Naive thymus-derived CD4-positive, alpha-beta T cell (primary cell): ENCODE measurements at regions of chr11 and their contacts with region 1.

Region 1: GRCh38 chr11:7442588-7443215 is 42.6 kb upstream of the OLFML1 start:
- DNase-seq: peak; percentile 15 to 69 (median 56)
- ATAC-seq: peak; percentile 87
- H3K4me3 ChIP-seq: no peak overlapping the region
- H3K4me3 Mint-ChIP-seq: no peak overlapping the region
- H3K27ac ChIP-seq: no peak overlapping the region
- H3K27ac Mint-ChIP-seq: no peak overlapping the region
- H3K4me1 ChIP-seq: no peaks in the 10 kb centered on the region
- H3K4me1 Mint-ChIP-seq: peaks cover 0 to 5% (median 0%) of the 10 kb centered on the region in 7 donors
- H3K27me3 ChIP-seq: no peaks in the 10 kb centered on the region
- H3K27me3 Mint-ChIP-seq: no peaks in the 10 kb centered on the region

Region 2: DNA sequence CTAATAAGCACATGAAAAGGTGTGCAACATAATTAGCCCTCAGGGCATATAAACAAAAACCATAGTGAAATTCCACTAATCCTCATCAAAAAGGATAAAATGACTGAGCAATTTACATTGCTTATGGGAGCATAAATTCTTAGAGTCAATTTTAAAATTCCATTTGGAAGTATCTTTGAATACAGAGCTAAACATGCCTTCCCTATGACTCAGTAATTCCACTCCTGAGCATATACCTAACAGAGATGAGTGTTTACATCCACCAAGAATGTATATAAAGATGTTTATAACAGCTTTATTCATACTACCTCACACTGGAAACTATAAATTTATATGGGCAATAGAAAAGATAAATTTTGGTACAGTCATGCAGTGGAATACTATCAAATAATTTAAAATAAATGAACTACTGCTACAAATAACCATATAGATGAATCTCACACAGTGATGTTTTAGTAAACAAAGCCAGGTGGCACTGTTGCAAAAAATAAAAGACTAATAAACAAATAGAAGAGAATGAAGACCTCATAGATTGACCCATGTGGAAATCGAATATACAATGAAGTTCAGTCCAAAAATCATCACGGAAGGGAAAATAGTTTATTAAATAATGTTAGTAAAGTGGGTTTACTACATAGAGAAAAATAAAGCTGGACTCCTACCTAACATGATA is 542.2 kb before region 1 on chr11:
- CTCF ChIA-PET with region 1: no interaction called
- POLR2A ChIA-PET with region 1: no interaction called
- intact Hi-C with region 1: loop called in 1 of 2 experiments (anchors 5 kb)
- DNase-seq: no peak
- ATAC-seq: no peak
- H3K4me3 ChIP-seq: no peak overlapping the region
- H3K4me3 Mint-ChIP-seq: no peak overlapping the region
- H3K27ac ChIP-seq: no peak overlapping the region
- H3K27ac Mint-ChIP-seq: no peak overlapping the region
- H3K4me1 ChIP-seq: no peaks in the 10 kb centered on the region
- H3K4me1 Mint-ChIP-seq: no peaks in the 10 kb centered on the region
- H3K27me3 ChIP-seq: no peaks in the 10 kb centered on the region
- H3K27me3 Mint-ChIP-seq: peaks cover 10 to 52% (median 44%) of the 10 kb centered on the region in 5 donors

Region 3: GRCh38 chr11:7353100-7353499 is 89.6 kb before region 1 on chr11:
- CTCF ChIA-PET with region 1: interaction called, 11 read pairs
- POLR2A ChIA-PET with region 1: no interaction called
- intact Hi-C with region 1: loop called (anchors 1 kb)
- DNase-seq: peak in 2 of 9 donors; percentile 8 to 21
- ATAC-seq: peak; percentile 54
- H3K4me3 ChIP-seq: no peak overlapping the region
- H3K4me3 Mint-ChIP-seq: no peak overlapping the region
- H3K27ac ChIP-seq: no peak overlapping the region
- H3K27ac Mint-ChIP-seq: no peak overlapping the region
- H3K4me1 ChIP-seq: no peaks in the 10 kb centered on the region
- H3K4me1 Mint-ChIP-seq: no peaks in the 10 kb centered on the region
- H3K27me3 ChIP-seq: no peaks in the 10 kb centered on the region
- H3K27me3 Mint-ChIP-seq: peaks cover 0 to 28% (median 20%) of the 10 kb centered on the region in 5 donors

Region 4: DNA sequence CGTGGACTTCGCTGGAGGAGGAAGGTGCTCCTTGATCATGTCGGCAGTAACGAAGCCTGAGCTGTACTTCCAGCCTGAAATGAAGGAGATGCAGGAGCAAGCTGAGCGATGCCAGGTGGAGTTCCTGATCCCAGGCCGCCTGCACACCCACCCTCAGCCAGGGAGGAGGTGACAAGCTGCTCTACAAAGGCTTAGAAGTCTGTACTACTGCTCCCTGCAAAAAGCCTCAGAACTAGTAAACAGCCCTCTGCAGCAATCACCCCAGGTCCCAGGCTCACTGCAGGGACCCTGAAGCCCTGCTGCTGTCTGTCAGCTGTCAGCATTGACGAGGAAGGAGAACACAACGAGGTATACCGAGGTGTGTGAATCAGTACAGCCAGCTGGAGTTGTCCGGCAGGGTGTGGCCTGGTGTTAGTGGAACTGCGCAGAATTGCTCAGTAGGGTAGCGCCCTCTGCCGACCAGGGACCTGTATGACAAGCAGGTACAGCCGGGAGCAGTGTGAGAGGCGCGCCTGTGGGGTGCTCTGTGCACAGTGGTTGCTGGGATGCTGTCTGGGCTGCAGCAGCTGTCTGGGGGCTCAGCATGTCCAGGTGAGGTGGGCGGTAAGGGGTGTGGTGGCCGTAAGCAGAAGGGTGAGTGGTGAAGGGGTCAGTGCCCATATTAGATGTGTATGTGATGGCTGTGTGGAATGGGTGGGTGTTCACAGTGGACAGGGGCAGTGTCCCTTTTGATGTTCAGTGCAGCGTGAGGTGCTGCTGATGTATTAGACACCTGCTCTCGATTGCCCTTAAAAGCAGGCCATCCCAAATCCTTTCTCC is 223.0 kb after region 1 on chr11:
- CTCF ChIA-PET with region 1: interaction called, 3 read pairs
- POLR2A ChIA-PET with region 1: no interaction called
- intact Hi-C with region 1: loop called in 1 of 2 experiments (anchors 1 kb)
- DNase-seq: peak; percentile 24 to 73 (median 62)
- ATAC-seq: peak; percentile 98
- H3K4me3 ChIP-seq: no peak overlapping the region
- H3K4me3 Mint-ChIP-seq: no peak overlapping the region
- H3K27ac ChIP-seq: no peak overlapping the region
- H3K27ac Mint-ChIP-seq: peak overlapping the region in 1 of 9 donors; percentile 17
- H3K4me1 ChIP-seq: no peaks in the 10 kb centered on the region
- H3K4me1 Mint-ChIP-seq: peaks cover 0 to 6% (median 2%) of the 10 kb centered on the region in 7 donors
- H3K27me3 ChIP-seq: no peaks in the 10 kb centered on the region
- H3K27me3 Mint-ChIP-seq: peaks cover 0 to 3% (median 0%) of the 10 kb centered on the region in 5 donors